Mammary epithelial cell (primary cell): ENCODE measurements at regions of chr10 and their contacts with region 1.

Region 1: GRCh38 chr10:71719464-71720201 is at the start of gene C10orf105:
- DNase-seq: no peak
- H3K4me3 ChIP-seq: no peak within 1 kb of the TSS
- H3K27ac ChIP-seq: no peak within 1 kb of the TSS
- H3K4me1 ChIP-seq: peaks cover 15% of the 10 kb centered on the region
- H3K27me3 ChIP-seq: no peaks in the 10 kb centered on the region
- CTCF ChIP-seq: no peak
- total RNA-seq, gene C10orf105: under 0.01 TPM in 1 of 2 donors, not detected in the other

Region 2: GRCh38 chr10:71372882-71373495 is 346.6 kb before region 1 on chr10:
- CTCF ChIA-PET with region 1: interaction called, 11 read pairs
- dilution Hi-C with region 1: no loop called
- in situ Hi-C with region 1: no loop called
- intact Hi-C with region 1: no loop called
- DNase-seq: no peak
- H3K4me3 ChIP-seq: no peak overlapping the region
- H3K27ac ChIP-seq: no peak overlapping the region
- H3K4me1 ChIP-seq: peaks cover 10% of the 10 kb centered on the region
- H3K27me3 ChIP-seq: no peaks in the 10 kb centered on the region
- CTCF ChIP-seq: no peak

Region 3: GRCh38 chr10:71473671-71474599 is 245.7 kb before region 1 on chr10:
- CTCF ChIA-PET with region 1: no interaction called
- dilution Hi-C with region 1: no loop called
- in situ Hi-C with region 1: no loop called
- intact Hi-C with region 1: no loop called
- DNase-seq: no peak
- H3K4me3 ChIP-seq: no peak overlapping the region
- H3K27ac ChIP-seq: no peak overlapping the region
- H3K4me1 ChIP-seq: no peaks in the 10 kb centered on the region
- H3K27me3 ChIP-seq: peaks cover 3% of the 10 kb centered on the region
- CTCF ChIP-seq: no peak

Region 4: DNA sequence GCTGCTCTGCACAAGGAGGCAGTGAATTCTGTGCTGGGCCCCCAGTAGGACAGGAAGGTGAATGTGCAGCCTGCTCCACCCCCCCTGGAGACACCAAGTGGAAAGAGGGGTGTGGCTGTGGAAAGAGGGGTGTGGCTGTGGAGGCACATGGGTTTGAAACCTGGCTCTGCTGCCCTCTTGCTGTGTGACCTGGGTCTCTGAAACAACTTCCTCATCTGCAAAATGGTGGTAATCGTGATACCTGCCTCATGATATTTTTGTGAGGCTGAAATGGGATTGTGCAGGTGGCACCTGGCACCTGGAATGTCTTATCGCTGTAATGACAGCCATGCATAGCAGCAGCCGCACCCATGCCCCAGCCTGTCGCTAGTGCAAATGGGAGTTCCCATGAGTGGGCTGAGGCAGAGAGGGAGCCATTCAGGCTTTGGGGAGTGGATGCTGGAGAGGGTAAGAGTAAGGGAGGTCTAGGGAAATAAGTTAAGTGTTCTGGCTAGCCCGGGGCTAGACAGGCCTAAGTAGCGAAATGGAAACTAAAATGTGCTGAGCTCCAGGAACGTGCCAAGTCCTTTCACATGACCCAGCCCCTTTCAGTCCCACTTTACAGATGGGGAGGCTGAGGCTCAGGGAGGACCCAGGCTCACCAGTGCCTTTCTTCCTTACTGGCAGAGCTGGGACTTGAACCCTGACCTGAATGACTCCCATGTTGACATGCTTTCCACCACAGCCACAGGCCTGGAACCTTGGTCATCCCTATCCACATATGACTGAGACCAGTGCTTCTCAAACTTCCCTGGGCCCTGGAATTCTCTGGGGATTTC is 35.1 kb before region 1 on chr10:
- CTCF ChIA-PET with region 1: no interaction called
- dilution Hi-C with region 1: loop called (anchors 5 kb)
- in situ Hi-C with region 1: no loop called
- intact Hi-C with region 1: no loop called
- DNase-seq: no peak
- H3K4me3 ChIP-seq: no peak overlapping the region
- H3K27ac ChIP-seq: no peak overlapping the region
- H3K4me1 ChIP-seq: no peaks in the 10 kb centered on the region
- H3K27me3 ChIP-seq: no peaks in the 10 kb centered on the region
- CTCF ChIP-seq: no peak

Region 5: DNA sequence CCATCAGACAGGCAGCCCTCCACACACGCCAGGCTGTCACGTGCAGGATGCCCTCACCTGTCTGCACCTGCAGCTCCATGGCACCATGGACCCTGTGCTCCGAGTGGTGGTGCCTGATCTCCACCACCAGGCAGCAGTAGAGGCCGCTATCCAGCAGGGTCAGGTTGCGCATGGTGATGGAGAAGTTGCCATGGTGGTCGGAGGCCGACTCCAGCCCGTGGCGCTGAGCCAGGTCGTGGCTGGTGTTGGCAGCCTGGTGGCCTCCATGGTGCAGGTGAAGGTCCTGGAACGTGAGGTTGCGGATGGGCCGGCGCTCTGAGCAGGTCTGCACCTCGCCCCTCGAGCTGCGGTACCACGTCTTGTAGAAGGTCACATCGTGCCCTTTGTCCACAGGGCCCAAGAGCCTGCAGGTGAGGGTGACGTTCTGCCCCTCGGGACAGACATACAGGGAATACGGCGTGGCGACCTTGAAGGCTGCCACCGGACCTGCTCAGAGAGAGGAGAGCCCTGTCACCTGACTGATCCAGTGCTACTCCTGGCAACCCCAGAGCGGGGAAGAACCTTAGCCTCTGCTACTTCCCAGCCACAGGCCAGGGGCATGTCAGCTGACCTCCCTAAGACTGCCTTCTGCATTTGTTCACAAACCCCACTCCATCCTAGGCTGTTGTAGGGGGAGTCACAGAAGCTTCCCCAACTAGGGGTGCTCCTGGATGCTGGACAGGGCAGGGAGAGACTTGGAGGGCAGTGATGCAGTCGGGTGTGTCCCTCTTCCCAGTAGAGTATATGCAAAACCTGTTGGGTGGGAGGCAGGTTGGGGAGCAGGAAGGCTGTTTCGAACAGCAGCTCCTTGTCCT is 42.1 kb after region 1 on chr10:
- CTCF ChIA-PET with region 1: no interaction called
- dilution Hi-C with region 1: loop called (anchors 5 kb)
- in situ Hi-C with region 1: no loop called
- intact Hi-C with region 1: no loop called
- DNase-seq: no peak
- H3K4me3 ChIP-seq: no peak overlapping the region
- H3K27ac ChIP-seq: peak overlapping the region; percentile 37
- H3K4me1 ChIP-seq: peaks cover 52% of the 10 kb centered on the region
- H3K27me3 ChIP-seq: no peaks in the 10 kb centered on the region
- CTCF ChIP-seq: peak in 1 of 2 donors; percentile 12

Region 6: GRCh38 chr10:71795248-71795647 is 75.6 kb after region 1 on chr10:
- CTCF ChIA-PET with region 1: no interaction called
- dilution Hi-C with region 1: loop called (anchors 5 kb)
- in situ Hi-C with region 1: no loop called
- intact Hi-C with region 1: no loop called
- DNase-seq: no peak
- H3K4me3 ChIP-seq: no peak overlapping the region
- H3K27ac ChIP-seq: no peak overlapping the region
- H3K4me1 ChIP-seq: no peaks in the 10 kb centered on the region
- H3K27me3 ChIP-seq: no peaks in the 10 kb centered on the region
- CTCF ChIP-seq: no peak